ENCODE measurements at regions of chr19 and their contacts with region 1.

Region 1: GRCh38 chr19:6056801-6057650 is 53.3 kb downstream of the RFX2 start:
- DNase-seq: peak in 7 of 10 donors; percentile 27 to 65 (median 55)
- H3K4me3 ChIP-seq: peak overlapping the region in 29 of 59 donors; percentile 3 to 49 (median 26)
- H3K27ac ChIP-seq: peak overlapping the region in 56 of 59 donors; percentile 25 to 90 (median 77)
- H3K27me3 ChIP-seq: no peaks in the 10 kb centered on the region
- CTCF ChIP-seq: no peak

Region 2: DNA sequence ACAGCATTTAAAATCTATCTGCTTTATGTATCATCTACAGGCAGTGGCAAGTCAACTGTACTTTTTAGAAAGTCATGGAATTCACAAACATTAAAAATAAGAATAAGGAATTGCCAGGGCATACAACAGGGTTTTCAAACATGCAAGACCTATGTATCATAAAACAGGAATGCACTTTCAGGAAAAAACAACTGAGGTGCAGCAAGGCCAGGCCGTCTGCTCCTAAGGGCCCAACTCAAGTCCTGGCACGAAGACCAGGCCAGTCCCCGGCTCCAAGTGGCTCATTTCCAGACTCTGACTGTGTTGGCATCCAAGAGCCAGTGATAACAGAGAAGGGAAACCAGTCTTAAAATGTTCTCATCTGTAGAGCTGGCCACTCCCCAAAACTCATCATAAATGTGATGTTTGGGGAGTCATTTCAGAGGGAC is 46.2 kb after region 1 on chr19:
- intact Hi-C with region 1: loop called (anchors 5 kb)
- DNase-seq: peak in 3 of 10 donors; percentile 29 to 84 (median 35)
- H3K4me3 ChIP-seq: no peak overlapping the region
- H3K27ac ChIP-seq: peak overlapping the region in 12 of 59 donors; percentile 0 to 59 (median 28)
- H3K27me3 ChIP-seq: no peaks in the 10 kb centered on the region
- CTCF ChIP-seq: no peak

Measured in dorsolateral prefrontal cortex (tissue), 120 donors.